CD8-positive, alpha-beta memory T cell (primary cell): ENCODE measurements at regions of chr2 and their contacts with region 1.

Region 1: GRCh38 chr2:25539136-25539535 is 134.2 kb downstream of the DTNB start:
- DNase-seq: no peak
- H3K4me3 ChIP-seq: no peak overlapping the region
- H3K4me3 Mint-ChIP-seq: no peak overlapping the region
- H3K27ac ChIP-seq: no peak overlapping the region
- H3K27ac Mint-ChIP-seq: no peak overlapping the region
- H3K4me1 ChIP-seq: no peaks in the 10 kb centered on the region
- H3K4me1 Mint-ChIP-seq: no peaks in the 10 kb centered on the region
- H3K27me3 ChIP-seq: no peaks in the 10 kb centered on the region
- H3K27me3 Mint-ChIP-seq: no peaks in the 10 kb centered on the region

Region 2: DNA sequence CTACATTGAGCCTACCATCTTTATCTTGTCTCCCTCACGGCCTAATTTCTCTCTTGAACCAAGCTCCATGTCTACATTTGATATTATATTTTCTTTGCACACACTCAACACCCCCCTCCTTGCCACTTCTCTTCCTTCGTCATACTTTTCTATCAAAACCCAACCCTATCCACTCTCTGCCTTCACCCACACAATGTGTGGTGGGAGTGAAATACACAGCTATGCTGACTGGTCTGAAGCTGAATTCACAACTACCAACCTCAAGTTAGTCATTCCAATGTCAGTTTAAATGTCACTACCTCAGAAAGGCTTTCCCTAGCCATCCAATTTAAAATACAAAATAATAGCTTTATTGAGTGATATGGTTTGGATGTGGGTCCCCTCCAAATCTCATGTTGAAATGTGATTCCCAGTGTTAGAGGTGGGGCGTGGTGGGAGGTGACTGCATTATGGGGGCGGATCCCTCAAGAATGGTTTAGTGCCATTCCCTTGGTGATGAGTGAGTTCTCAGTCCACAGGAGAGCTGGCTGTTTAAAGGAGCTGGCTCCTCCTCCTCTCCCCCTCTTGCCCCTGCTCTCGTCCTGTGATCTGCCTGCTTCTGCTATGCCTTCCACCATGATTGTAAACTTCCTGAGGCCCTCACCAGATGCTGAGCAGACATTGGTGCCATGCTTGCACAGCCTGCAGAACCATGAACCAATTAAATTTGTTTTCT is 22.2 kb after region 1 on chr2:
- CTCF ChIA-PET with region 1: no interaction called
- POLR2A ChIA-PET with region 1: interaction called, 11 read pairs
- DNase-seq: no peak
- H3K4me3 ChIP-seq: no peak overlapping the region
- H3K4me3 Mint-ChIP-seq: peak overlapping the region in 1 of 7 donors; percentile 31
- H3K27ac ChIP-seq: no peak overlapping the region
- H3K27ac Mint-ChIP-seq: peak overlapping the region in 4 of 8 donors; percentile 5 to 77 (median 40)
- H3K4me1 ChIP-seq: peaks cover 14% of the 10 kb centered on the region
- H3K4me1 Mint-ChIP-seq: peaks cover 21 to 27% (median 26%) of the 10 kb centered on the region in 3 donors
- H3K27me3 ChIP-seq: no peaks in the 10 kb centered on the region
- H3K27me3 Mint-ChIP-seq: no peaks in the 10 kb centered on the region